Transverse colon (tissue), 4 donors: ENCODE measurements at regions of chr11 and their contacts with region 1.

Region 1: GRCh38 chr11:19566583-19567379 is 145.9 kb upstream of the NAV2 start:
- DNase-seq: no peak
- H3K4me3 ChIP-seq: no peak overlapping the region
- H3K27ac ChIP-seq: peak overlapping the region in 3 of 4 donors; percentile 53 to 86 (median 69)
- H3K4me1 ChIP-seq: peaks cover 0 to 18% (median 17%) of the 10 kb centered on the region in 4 donors
- H3K27me3 ChIP-seq: no peaks in the 10 kb centered on the region
- CTCF ChIP-seq: no peak
- EP300 ChIP-seq: no peak
- POLR2A ChIP-seq: no peak

Region 2: GRCh38 chr11:19595840-19596751 is 29.3 kb after region 1 on chr11:
- in situ Hi-C with region 1: no loop called
- intact Hi-C with region 1: loop called (anchors 1 kb)
- DNase-seq: no peak
- H3K4me3 ChIP-seq: no peak overlapping the region
- H3K27ac ChIP-seq: peak overlapping the region; percentile 54 to 68 (median 60)
- H3K4me1 ChIP-seq: peaks cover 0 to 14% (median 4%) of the 10 kb centered on the region in 4 donors
- H3K27me3 ChIP-seq: no peaks in the 10 kb centered on the region
- CTCF ChIP-seq: no peak
- EP300 ChIP-seq: no peak
- POLR2A ChIP-seq: no peak

Region 3: DNA sequence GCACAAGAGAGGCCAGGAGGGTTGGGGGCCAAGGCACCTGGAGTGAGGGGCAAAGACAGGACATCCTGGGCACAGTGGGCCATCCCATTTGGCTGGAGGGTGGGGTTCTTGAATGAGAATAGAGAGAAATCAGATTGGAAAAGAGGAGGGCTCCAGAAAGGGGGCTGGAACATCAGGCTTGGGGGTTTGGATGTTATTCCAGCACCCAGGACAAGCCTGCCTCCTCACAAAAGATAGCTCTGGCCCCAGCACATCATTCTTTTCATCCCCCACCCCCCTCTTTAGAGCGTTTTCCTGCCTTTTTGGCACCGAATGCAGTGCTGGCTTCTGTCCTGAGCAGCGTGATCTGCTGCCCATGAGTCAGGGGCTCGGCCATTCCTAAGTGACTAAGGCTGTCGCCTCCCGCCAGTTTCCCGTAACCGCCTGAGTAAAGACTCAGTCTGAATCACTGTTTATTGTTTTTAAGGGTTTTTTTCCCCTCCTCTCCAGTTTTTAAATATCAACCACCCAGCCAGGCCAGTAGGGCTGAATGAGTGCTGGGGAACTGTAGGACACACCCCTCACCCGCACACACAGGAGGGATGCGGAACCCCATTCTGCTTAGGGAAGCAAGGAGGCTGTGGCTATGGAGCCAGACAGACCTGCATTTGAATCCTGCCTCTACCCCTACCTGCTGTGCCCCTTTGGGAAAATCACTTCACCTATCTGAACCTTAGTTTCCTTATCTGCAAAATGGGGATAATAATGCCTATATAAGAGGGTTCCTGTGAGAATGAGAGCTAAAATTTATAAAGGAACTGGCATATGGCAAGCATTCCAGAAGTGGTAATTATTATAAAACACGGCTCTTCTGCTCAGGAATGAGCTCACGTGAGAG is 113.4 kb after region 1 on chr11:
- in situ Hi-C with region 1: no loop called
- intact Hi-C with region 1: loop called (anchors 5 kb)
- DNase-seq: peak; percentile 71
- H3K4me3 ChIP-seq: no peak overlapping the region
- H3K27ac ChIP-seq: peak overlapping the region; percentile 77 to 83 (median 80)
- H3K4me1 ChIP-seq: peaks cover 5 to 38% (median 11%) of the 10 kb centered on the region in 4 donors
- H3K27me3 ChIP-seq: no peaks in the 10 kb centered on the region
- CTCF ChIP-seq: peak in 1 of 5 experiments; percentile 22
- EP300 ChIP-seq: peak; percentile 83
- POLR2A ChIP-seq: no peak

Region 4: DNA sequence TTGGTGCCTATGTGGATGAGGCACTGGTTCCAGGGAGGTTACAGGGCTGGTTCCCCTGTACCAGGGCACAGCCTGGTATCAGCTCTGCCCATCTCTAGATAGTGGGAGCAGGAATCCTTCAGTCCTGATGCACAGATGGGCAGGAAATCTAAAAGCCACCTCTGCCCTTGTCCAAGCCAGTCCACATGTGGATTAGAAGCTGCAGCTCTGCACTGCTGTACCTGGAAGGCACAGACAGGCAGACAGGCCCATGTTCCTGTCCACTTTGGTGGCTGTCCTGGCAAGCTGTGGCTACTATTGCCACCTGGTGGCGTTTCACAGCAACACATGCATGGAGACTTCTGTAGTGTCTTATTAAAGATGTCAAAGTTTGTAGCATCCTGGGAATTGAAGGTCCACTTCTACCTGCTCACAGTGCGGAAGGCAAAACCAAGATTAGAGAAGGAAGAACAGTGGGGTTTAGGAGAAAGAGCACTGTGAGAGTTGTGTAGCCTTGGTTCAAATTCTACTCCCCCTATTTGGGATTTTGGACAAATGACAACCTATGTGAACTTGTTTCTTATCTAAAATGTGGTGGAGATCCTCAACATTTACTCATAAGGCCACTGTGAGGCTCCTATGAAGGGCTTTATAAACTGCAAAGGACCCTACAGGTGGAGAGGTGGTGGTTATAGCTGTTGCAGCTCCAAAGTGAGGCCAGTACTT is 176.0 kb after region 1 on chr11:
- in situ Hi-C with region 1: loop called (anchors 5 to 10 kb)
- intact Hi-C with region 1: loop called (anchors 2 kb)
- DNase-seq: peak; percentile 83
- H3K4me3 ChIP-seq: no peak overlapping the region
- H3K27ac ChIP-seq: peak overlapping the region in 1 of 4 donors; percentile 50
- H3K4me1 ChIP-seq: peaks cover 0 to 9% (median 4%) of the 10 kb centered on the region in 4 donors
- H3K27me3 ChIP-seq: no peaks in the 10 kb centered on the region
- CTCF ChIP-seq: peak; percentile 85 to 93 (median 89)
- EP300 ChIP-seq: no peak
- POLR2A ChIP-seq: no peak

Region 5: DNA sequence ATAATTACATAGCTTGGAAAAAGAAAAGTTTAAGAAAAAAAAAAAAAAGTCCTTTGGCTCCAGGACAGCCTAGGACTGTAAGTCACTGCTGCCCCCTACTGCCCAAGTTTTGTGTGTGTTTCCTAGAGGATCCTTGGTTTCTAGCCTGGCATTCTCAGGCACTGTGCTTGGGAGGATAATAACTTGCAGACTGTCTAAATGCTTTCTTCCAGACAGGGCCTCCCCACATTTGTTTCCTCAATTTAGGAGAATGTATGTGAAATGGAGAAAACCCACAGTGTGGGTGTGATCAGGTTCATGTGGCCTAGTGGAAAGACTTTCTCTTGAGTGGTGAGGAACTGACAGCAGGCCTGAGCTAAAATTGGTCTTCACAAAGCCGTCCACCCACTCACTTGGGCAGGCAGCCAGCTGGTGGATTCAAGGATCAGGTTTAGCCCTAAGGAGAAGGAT is 336.9 kb after region 1 on chr11:
- in situ Hi-C with region 1: loop called (anchors 5 to 10 kb)
- intact Hi-C with region 1: loop called (anchors 5 kb)
- DNase-seq: peak; percentile 82
- H3K4me3 ChIP-seq: no peak overlapping the region
- H3K27ac ChIP-seq: no peak overlapping the region
- H3K4me1 ChIP-seq: peaks cover 0 to 4% (median 0%) of the 10 kb centered on the region in 4 donors
- H3K27me3 ChIP-seq: no peaks in the 10 kb centered on the region
- CTCF ChIP-seq: peak; percentile 71 to 79 (median 78)
- EP300 ChIP-seq: no peak
- POLR2A ChIP-seq: no peak